PC-3 (cell line): ENCODE measurements at regions of chr7 and their contacts with region 1.

Region 1: DNA sequence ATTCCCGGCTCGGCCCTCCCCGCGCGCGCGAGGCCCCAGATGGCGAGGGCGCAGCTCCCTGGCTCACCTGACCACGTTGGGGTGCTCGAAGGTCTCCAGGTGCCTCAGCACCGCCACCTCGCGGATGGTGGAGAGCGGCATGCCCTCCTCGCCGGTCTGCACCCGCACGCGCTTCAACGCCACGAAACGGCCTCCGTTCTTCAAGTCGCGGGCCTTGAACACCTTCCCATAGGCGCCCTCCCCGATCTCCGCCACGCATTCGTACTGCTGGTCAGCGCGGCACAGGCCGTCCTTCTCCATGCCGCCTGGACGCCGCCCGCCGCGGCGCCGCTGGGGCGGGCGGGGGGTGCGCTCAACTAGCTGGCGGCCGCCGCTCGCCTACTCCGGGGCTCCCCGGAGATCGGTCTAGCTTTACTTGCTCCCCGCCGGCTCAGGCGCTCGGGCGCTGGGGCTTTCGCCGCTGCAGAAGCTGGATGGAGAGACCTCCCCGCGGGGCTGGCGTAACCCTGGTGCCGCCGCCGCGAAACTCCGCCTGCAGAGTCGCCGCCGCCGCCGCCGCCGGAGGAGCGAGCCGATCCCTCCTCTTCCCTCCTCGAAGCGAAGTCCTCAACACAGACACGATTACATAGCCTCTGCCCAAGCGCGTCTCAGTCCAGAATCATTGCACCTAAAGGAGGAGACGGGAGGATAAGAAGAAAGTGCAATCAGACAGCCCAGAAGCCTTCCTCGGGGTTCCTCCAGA is 3.2 kb downstream of the CDK6 start:
- DNase-seq: peak; percentile 82
- ATAC-seq: peak; percentile 60
- H3K4me3 ChIP-seq: peak overlapping the region; percentile 82
- H3K27ac ChIP-seq: peak overlapping the region; percentile 66
- H3K4me1 ChIP-seq: peaks cover 31% of the 10 kb centered on the region
- H3K27me3 ChIP-seq: no peaks in the 10 kb centered on the region
- CTCF ChIP-seq: peak; percentile 79

Region 2: DNA sequence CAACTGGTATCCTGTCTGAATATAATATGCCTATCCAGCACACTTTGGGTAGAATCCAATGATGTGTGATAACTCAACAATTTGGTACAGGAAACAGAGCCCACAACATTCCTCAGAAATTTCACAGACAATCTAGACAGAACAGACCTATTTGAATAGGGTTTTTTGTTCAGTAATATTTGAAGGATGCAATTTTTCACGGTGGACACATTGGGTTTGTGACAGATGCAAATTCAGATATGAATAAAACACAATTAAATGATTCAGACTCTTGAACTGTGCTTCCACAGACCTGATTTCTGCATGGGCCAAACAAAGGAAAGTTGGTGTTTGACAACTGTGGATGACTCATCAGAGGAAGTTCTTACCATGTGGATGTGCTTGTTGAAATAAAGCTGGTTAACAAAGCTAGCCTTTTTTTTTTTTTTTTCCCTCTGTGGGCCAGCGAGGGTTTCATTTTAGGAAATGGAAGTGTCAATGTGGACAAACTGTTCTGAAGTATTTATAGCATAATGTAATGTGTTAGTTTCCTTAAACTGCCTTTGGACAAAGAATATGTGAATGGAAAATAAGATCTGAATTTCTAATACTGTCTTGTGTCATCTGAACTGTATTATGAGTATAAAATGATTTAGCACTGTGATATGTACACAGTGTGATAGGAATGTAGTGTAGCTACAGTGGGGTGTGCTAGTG is 199.8 kb before region 1 on chr7:
- CTCF ChIA-PET with region 1: interaction called, 5 read pairs
- POLR2A ChIA-PET with region 1: no interaction called
- intact Hi-C with region 1: loop called (anchors 2 kb)
- DNase-seq: peak; percentile 91
- ATAC-seq: peak; percentile 80
- H3K4me3 ChIP-seq: peak overlapping the region; percentile 38; the same call in 1 of the 2 replicates
- H3K27ac ChIP-seq: peak overlapping the region; percentile 73
- H3K4me1 ChIP-seq: peaks cover 51% of the 10 kb centered on the region
- H3K27me3 ChIP-seq: no peaks in the 10 kb centered on the region
- CTCF ChIP-seq: no peak

Region 3: DNA sequence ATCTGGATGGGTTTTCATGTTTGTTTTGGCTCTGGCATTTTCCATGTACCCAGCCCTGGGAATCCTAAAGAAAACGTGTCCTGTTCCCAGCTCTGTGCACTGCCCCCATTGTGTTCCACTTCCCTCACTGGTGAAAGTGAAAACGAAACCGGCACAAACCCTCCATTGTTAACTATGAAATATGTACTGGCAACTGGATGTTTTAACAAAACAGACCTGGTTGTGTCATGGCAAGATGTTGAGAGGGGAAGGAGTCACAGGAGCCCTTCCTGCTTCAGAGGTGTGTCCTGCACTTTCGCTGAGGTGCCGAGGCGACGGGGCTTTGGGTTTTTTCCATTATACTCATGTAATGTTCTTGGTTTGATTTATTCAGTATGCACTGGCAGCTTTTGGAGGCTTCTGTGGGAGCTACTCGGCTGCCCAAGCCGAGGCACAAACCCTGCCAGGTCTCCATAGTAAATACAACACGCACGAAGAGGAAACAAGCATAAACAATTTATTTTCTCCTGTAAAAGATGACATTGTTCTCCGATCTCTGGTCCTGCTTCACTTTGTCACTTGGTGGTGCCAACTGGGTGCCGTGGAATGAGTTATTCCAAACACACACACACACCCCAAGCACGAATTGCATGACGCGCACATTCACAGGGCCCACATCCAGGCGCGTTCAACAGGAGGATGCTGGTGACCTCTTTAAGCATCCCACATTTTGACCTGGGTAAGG is 115.0 kb before region 1 on chr7:
- CTCF ChIA-PET with region 1: interaction called, 9 read pairs
- POLR2A ChIA-PET with region 1: no interaction called
- intact Hi-C with region 1: loop called (anchors 1 kb)
- DNase-seq: peak; percentile 70
- ATAC-seq: peak; percentile 84
- H3K4me3 ChIP-seq: peak overlapping the region; percentile 64
- H3K27ac ChIP-seq: peak overlapping the region; percentile 86
- H3K4me1 ChIP-seq: peaks cover 16% of the 10 kb centered on the region
- H3K27me3 ChIP-seq: no peaks in the 10 kb centered on the region
- CTCF ChIP-seq: no peak

Region 4: GRCh38 chr7:92904292-92905131 is 71.3 kb after region 1 on chr7:
- CTCF ChIA-PET with region 1: interaction called, 4 read pairs
- POLR2A ChIA-PET with region 1: no interaction called
- intact Hi-C with region 1: loop called (anchors 1 kb)
- DNase-seq: peak; percentile 94
- ATAC-seq: peak; percentile 98
- H3K4me3 ChIP-seq: no peak overlapping the region
- H3K27ac ChIP-seq: peak overlapping the region; percentile 92
- H3K4me1 ChIP-seq: peaks cover 25% of the 10 kb centered on the region
- H3K27me3 ChIP-seq: no peaks in the 10 kb centered on the region
- CTCF ChIP-seq: no peak

Region 5: GRCh38 chr7:92916674-92917224 is 83.6 kb after region 1 on chr7:
- CTCF ChIA-PET with region 1: no interaction called
- POLR2A ChIA-PET with region 1: no interaction called
- intact Hi-C with region 1: no loop called
- DNase-seq: peak; percentile 84
- ATAC-seq: peak; percentile 98
- H3K4me3 ChIP-seq: no peak overlapping the region
- H3K27ac ChIP-seq: peak overlapping the region; percentile 36
- H3K4me1 ChIP-seq: peaks cover 16% of the 10 kb centered on the region
- H3K27me3 ChIP-seq: no peaks in the 10 kb centered on the region
- CTCF ChIP-seq: no peak

Region 6: GRCh38 chr7:93194386-93194785 is 361.2 kb after region 1 on chr7:
- CTCF ChIA-PET with region 1: no interaction called
- POLR2A ChIA-PET with region 1: interaction called, 11 read pairs
- intact Hi-C with region 1: no loop called
- DNase-seq: peak; percentile 85
- ATAC-seq: peak; percentile 94
- H3K4me3 ChIP-seq: no peak overlapping the region
- H3K27ac ChIP-seq: peak overlapping the region; percentile 59
- H3K4me1 ChIP-seq: peaks cover 18% of the 10 kb centered on the region
- H3K27me3 ChIP-seq: no peaks in the 10 kb centered on the region
- CTCF ChIP-seq: no peak